ENCODE measurements at regions of chr6 and their contacts with region 1.

Region 1: DNA sequence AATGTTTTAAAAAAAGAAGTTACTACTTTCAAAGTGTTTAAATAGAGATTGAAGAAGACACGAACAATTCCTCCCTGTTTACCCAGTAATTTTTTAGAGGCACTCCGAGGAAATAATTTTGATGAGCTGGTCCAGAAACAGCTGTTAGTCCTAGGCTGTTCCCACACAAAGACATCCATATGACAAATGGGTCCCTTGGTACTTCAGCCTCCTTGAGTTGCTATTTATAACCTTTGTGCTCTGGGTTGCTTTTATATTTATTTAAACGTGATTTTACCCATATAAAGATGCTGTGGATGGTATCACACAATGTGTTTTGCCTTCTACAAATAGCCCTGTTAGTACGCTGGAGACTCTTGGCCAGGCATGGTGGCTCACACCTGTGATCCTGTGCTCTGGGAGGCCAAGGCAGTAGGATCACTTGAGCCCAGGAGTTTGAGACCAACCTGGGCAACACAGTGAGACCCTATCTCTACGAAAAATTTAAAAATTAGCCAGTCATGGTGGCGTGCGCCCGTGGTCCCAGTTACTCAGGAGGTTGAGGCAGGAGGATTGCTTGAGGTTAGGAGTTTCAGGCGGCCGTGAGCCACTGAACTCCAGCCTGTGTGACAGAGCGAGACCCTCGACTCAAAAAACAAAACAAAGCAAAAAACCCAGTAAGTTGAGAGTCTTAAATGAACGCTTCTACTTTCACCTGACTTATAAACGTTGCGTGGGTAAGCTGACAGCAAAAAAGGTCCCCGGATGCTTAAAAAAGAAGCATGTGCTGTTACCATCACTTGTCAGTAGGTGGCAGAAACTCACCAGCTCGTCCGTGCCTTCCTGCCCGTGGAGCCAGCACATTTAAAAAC is 56.9 kb upstream of the ARMH2 start:
- H3K4me3 Mint-ChIP-seq: no peak overlapping the region
- H3K27ac Mint-ChIP-seq: no peak overlapping the region
- H3K4me1 Mint-ChIP-seq: peaks cover 32% of the 10 kb centered on the region
- H3K27me3 Mint-ChIP-seq: no peaks in the 10 kb centered on the region

Region 2: GRCh38 chr6:24666641-24667377 is 188.8 kb before region 1 on chr6 and contains the starts of genes ACOT13 and TDP2:
- intact Hi-C with region 1: no loop called
- H3K4me3 Mint-ChIP-seq: peak within 1 kb of the TSS; percentile 94
- H3K27ac Mint-ChIP-seq: peak within 1 kb of the TSS; percentile 88
- H3K4me1 Mint-ChIP-seq: peaks cover 60% of the 10 kb centered on the region
- H3K27me3 Mint-ChIP-seq: no peaks in the 10 kb centered on the region

Region 3: DNA sequence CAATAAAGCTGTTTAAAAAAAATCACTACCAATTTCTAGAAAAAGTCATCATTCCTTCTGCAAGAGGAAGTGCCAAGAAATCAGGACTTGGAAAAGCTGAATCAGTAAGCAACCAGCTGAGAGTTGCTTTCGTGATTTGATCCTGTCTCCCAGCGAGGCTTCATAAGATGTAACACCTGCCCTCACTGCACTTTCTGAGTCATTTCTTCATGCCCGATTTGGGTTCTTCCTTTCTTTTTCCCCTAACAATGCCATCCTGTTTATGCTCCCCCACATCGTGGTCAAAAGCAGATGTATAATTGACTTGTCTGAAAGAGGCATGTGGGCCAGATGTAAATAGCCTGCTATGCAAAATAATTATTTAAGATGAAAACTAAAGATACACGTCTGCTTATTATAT is 28.0 kb after region 1 on chr6:
- intact Hi-C with region 1: no loop called
- H3K4me3 Mint-ChIP-seq: no peak overlapping the region
- H3K27ac Mint-ChIP-seq: no peak overlapping the region
- H3K4me1 Mint-ChIP-seq: peaks cover 10% of the 10 kb centered on the region
- H3K27me3 Mint-ChIP-seq: no peaks in the 10 kb centered on the region

Region 4: DNA sequence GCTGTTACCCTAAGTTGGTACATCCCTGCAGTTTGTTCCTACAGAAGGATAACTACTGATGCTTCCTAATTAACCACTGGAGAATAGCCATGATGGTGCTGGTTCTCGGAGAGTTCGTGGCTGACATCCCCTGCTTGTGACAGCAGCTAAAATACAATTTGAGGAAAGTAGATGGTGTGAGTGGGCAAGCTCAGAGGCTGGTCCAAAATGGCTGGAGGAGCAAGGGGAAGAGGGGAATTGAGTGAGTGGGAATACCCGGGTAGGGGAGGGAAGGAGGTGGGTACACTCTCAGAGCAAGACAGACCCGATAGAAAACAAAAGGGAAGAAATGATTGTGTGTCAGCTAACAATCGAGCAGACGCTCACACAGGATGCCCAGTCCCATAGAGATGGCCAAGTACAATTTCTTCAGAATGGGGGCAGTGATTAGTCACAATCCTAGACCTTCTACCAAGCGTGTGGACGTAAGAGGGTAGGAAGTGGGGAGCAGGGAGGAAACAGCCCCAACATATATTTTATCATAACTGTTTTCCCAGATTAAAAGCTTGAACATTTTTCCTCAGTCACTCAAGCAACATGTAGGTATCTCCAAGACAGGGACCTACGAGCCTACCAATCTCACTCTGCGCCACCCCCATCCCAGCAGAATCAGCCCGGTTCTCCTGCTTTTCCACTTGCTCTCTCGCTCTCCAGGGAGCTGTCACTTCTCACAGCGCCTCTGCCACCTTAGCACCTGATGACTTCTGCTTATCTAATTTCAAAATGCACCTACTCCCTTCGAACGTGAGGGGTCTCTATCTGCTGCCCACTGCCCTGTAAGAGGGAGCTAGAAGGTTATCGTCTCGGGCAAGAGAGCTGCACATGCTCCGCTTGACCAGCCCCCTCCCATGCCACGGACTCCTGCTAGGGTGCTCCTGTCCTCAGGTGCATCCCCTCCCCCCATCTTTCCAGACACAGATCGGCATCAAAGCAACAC is 53.9 kb after region 1 on chr6:
- intact Hi-C with region 1: loop called (anchors 2 kb)
- H3K4me3 Mint-ChIP-seq: peak overlapping the region; percentile 76
- H3K27ac Mint-ChIP-seq: peak overlapping the region; percentile 61
- H3K4me1 Mint-ChIP-seq: peaks cover 73% of the 10 kb centered on the region
- H3K27me3 Mint-ChIP-seq: peaks cover 6% of the 10 kb centered on the region

Region 5: DNA sequence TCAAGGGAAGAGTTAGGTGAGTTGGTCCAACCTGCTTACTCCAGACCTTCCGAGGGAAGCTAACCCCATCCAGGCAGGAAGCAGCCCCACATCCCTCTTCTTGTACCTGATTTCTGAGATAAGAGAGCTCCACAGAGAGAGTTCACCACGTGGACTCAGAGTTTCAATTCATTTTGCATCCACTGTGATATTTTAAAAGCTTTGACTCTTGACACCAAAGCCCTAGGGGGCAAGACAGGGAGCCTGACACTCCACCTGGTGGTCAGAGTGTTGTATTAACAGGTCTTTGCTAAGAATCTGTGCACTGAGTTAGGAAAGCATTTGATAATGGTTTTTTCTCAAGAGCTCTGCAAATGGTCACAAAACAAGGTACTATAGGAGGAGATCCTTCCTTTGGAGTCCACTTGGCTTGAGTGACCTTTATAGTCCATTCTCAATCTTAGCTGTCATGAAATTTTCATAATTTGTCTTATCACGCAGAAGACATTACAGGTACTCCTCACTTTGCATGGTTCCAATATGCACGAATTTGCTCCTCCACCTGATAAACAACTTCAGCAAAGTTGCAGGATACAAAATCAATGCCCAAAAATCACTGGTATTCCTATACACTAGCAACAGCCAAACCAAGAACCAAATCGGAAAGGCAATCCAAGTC is 136.3 kb after region 1 on chr6:
- intact Hi-C with region 1: loop called (anchors 1 kb)
- H3K4me3 Mint-ChIP-seq: no peak overlapping the region
- H3K27ac Mint-ChIP-seq: no peak overlapping the region
- H3K4me1 Mint-ChIP-seq: peaks cover 17% of the 10 kb centered on the region
- H3K27me3 Mint-ChIP-seq: no peaks in the 10 kb centered on the region

Region 6: DNA sequence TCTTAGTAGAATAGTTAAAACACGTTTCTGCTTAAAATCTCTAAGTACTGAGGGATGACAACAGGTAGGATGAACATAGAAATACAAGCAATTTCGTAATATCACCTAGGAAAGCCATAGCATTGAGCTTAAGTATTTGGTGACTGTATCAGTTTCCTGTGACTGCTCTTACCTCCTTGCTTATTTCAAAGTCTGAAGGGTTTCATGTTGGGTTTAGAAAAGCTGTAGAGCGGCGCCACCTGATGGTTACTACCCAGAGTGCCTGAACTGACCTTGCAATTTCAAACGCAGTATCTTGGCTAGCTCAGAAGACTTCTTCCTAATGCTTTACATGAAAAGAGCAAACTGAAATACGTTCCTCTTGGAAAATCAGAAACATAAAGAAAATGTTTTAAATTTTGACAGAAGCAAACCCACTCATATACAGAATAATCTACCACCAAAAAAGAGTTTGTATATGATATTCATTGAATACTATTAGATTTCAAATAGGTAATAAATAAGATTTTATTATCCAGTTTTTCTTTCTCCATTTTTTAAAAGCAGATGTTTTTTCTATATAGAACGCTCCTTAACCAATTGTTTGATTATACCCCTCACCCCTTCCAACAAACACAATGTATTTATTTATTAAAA is 162.4 kb after region 1 on chr6:
- intact Hi-C with region 1: loop called (anchors 1 kb)
- H3K4me3 Mint-ChIP-seq: no peak overlapping the region
- H3K27ac Mint-ChIP-seq: no peak overlapping the region
- H3K4me1 Mint-ChIP-seq: peaks cover 34% of the 10 kb centered on the region
- H3K27me3 Mint-ChIP-seq: peaks cover 2% of the 10 kb centered on the region

Measured in dendritic cell treated with granulocyte-macrophage colony-stimulating factor and Interleukin-4, amounts not matched to agents 40 ng/mL and 50 ng/mL, for 4 days (primary cell).